Breast epithelium (tissue), 4 donors: ENCODE measurements at regions of chr6 and their contacts with region 1.

Region 1: DNA sequence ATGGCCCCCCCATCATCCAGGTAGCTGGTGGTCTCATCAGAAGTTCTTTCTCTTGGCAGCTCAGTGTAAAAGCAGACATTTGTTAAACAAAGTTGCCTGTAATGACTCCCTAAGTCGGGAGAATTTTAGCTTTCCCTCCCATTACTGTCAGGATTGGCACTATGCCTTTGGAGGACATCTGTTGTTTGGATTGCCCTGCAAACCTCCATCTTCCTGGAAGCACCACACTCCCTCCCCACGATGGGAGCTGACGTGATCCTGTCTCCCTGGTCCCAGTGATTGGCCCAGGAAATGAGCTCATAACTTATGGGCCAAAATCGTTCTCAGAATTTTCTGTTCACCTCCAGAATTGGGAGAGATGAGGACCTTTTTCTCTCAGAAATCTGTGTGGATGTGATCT is 42.6 kb upstream of the CNR1 start:
- DNase-seq: no peak
- H3K4me3 ChIP-seq: no peak overlapping the region
- H3K27ac ChIP-seq: no peak overlapping the region
- H3K4me1 ChIP-seq: no peaks in the 10 kb centered on the region
- H3K27me3 ChIP-seq: no peaks in the 10 kb centered on the region
- CTCF ChIP-seq: no peak
- POLR2A ChIP-seq: no peak

Region 2: DNA sequence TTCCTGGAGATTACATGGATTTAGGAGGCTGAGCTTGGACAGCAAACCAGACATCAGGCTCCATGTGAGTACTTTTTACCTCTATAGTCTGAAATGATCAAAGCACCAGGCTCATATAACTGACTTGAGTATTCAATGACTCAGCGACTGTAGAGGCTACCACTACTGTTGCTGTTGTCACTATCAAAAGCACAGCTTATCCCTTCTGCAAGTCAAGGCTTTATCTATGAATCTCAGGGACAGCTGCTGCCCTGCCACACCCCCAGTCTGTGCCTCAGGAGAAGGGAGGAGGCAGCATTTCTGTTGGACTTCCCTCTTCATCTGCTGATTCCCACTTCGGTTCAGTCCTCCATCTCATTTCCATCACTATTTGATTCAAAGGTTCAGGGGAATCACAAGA is 37.9 kb after region 1 on chr6:
- intact Hi-C with region 1: loop called (anchors 2 kb)
- DNase-seq: no peak
- H3K4me3 ChIP-seq: no peak overlapping the region
- H3K27ac ChIP-seq: no peak overlapping the region
- H3K4me1 ChIP-seq: no peaks in the 10 kb centered on the region
- H3K27me3 ChIP-seq: no peaks in the 10 kb centered on the region
- CTCF ChIP-seq: no peak
- POLR2A ChIP-seq: no peak

Region 3: DNA sequence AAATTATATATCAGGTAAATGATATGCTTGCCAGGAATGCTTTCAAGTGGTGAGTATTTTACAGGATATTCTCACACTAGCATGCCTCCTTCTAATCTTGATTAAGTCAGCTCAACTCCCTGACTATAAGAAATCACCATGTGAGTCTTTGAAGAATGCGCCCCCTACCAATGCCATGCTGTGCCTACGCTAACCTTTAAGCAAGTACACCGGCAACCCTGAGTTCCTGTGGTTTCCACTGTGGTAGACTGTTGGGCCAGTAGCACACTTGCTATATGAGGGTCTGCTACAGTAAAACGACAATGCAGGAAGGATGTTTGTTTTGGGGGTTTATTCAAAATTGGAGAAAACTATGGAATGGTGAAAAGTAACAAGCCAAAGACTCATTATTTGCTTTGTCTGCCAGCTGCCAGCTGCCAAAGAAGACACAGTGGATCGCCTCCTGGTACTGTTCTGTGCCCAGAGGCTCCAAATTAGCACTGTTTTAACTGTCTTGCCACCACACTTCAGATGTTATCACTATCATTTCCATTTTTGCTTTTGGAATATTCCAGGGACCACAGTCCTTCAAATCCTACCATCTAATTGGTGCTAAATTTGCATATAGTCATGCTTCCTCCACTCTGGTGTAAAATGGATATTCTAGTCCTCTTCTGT is 421.2 kb after region 1 on chr6:
- intact Hi-C with region 1: no loop called
- DNase-seq: no peak
- H3K4me3 ChIP-seq: no peak overlapping the region
- H3K27ac ChIP-seq: no peak overlapping the region
- H3K4me1 ChIP-seq: no peaks in the 10 kb centered on the region
- H3K27me3 ChIP-seq: no peaks in the 10 kb centered on the region
- CTCF ChIP-seq: no peak
- POLR2A ChIP-seq: no peak